Heart left ventricle (tissue), 16 donors: ENCODE measurements at regions of chr11 and their contacts with region 1.

Region 1: GRCh38 chr11:72483412-72484186 is 49.3 kb upstream of the CLPB start:
- DNase-seq: peak in 1 of 5 donors; percentile 10
- ATAC-seq: peak in 3 of 4 donors; percentile 40 to 71 (median 69)
- H3K4me3 ChIP-seq: no peak overlapping the region
- H3K27ac ChIP-seq: peak overlapping the region in 3 of 12 donors; percentile 23 to 88 (median 43)
- H3K4me1 ChIP-seq: peaks cover 0 to 27% (median 0%) of the 10 kb centered on the region in 12 donors
- H3K27me3 ChIP-seq: peaks cover 0 to 5% (median 0%) of the 10 kb centered on the region in 9 donors
- CTCF ChIP-seq: no peak
- POLR2A ChIP-seq: no peak

Region 2: GRCh38 chr11:72573072-72573854 is 89.7 kb after region 1 on chr11:
- intact Hi-C with region 1: loop called in 7 of 10 experiments (anchors 5 kb)
- DNase-seq: no peak
- ATAC-seq: peak; percentile 44 to 77 (median 64)
- H3K4me3 ChIP-seq: no peak overlapping the region
- H3K27ac ChIP-seq: no peak overlapping the region
- H3K4me1 ChIP-seq: peaks cover 0 to 16% (median 0%) of the 10 kb centered on the region in 12 donors
- H3K27me3 ChIP-seq: no peaks in the 10 kb centered on the region
- CTCF ChIP-seq: peak; percentile 27 to 66 (median 54)
- POLR2A ChIP-seq: no peak

Region 3: DNA sequence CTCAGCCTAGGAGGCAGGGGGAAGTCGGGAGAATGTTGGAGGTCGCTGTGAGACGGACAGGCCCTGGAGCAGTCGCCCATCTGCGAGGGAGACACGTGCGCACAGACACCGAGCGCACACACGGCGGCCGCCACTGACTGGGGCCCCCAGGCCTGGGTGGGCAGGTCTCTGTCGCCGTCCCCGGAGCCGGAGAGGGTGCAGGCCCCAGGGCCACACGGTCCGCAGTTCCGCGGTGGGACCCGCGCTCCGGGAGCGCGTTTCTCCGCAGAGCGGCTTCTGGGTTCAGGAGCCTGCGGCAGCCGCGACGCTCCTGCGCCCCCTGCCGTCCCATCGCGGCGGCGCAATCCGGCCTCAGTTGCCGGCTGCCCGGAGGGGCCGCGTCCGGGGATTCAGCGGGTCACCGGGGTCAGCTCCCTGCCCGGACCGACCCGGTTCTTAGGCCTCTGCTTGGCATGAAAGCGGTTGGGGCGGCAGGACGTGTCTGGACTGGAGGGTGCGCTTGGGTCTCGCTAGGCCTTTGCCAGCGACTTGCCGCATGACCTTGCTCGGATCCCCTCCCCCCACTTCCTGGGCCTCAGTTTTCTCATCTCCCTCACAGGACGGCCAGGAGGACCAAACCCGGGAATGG is 159.4 kb after region 1 on chr11:
- intact Hi-C with region 1: loop called in 4 of 10 experiments (anchors 2 to 10 kb)
- DNase-seq: peak; percentile 41 to 84 (median 62)
- ATAC-seq: peak; percentile 33 to 82 (median 72)
- H3K4me3 ChIP-seq: peak overlapping the region; percentile 54 to 88 (median 72)
- H3K27ac ChIP-seq: peak overlapping the region in 9 of 12 donors; percentile 8 to 82 (median 43)
- H3K4me1 ChIP-seq: peaks cover 2 to 43% (median 20%) of the 10 kb centered on the region in 12 donors
- H3K27me3 ChIP-seq: peaks cover 0 to 29% (median 0%) of the 10 kb centered on the region in 9 donors
- CTCF ChIP-seq: peak; percentile 95 to 100 (median 98)
- POLR2A ChIP-seq: no peak

Region 4: GRCh38 chr11:72648384-72649136 is 165.0 kb after region 1 on chr11:
- intact Hi-C with region 1: loop called in 4 of 10 experiments (anchors 2 to 10 kb)
- DNase-seq: no peak
- ATAC-seq: no peak
- H3K4me3 ChIP-seq: no peak overlapping the region
- H3K27ac ChIP-seq: no peak overlapping the region
- H3K4me1 ChIP-seq: peaks cover 0 to 2% (median 0%) of the 10 kb centered on the region in 12 donors
- H3K27me3 ChIP-seq: no peaks in the 10 kb centered on the region
- CTCF ChIP-seq: no peak
- POLR2A ChIP-seq: no peak

Region 5: GRCh38 chr11:72683782-72684200 is 200.2 kb after region 1 on chr11:
- intact Hi-C with region 1: loop called in 8 of 10 experiments (anchors 5 to 10 kb)
- DNase-seq: peak; percentile 53 to 83 (median 65)
- ATAC-seq: peak; percentile 43 to 60 (median 46)
- H3K4me3 ChIP-seq: no peak overlapping the region
- H3K27ac ChIP-seq: peak overlapping the region in 6 of 12 donors; percentile 38 to 72 (median 66)
- H3K4me1 ChIP-seq: peaks cover 0 to 61% (median 31%) of the 10 kb centered on the region in 12 donors
- H3K27me3 ChIP-seq: peaks cover 0 to 4% (median 0%) of the 10 kb centered on the region in 9 donors
- CTCF ChIP-seq: peak; percentile 79 to 95 (median 89)
- POLR2A ChIP-seq: no peak